Endothelial cell of umbilical vein (primary cell): ENCODE measurements at regions of chr2 and their contacts with region 1.

Region 1: GRCh38 chr2:223101340-223102039 is 49.5 kb downstream of the KCNE4 start:
- DNase-seq: peak; percentile 51
- H3K4me3 ChIP-seq: no peak overlapping the region
- H3K27ac ChIP-seq: no peak overlapping the region
- H3K4me1 ChIP-seq: no peaks in the 10 kb centered on the region
- H3K27me3 ChIP-seq: no peaks in the 10 kb centered on the region
- CTCF ChIP-seq: peak; percentile 24 to 52
- POLR2A ChIP-seq: no peak

Region 2: GRCh38 chr2:222982010-222982908 is 119.2 kb before region 1 on chr2:
- CTCF ChIA-PET with region 1: interaction called, 14 read pairs
- POLR2A ChIA-PET with region 1: no interaction called
- dilution Hi-C with region 1: no loop called
- intact Hi-C with region 1: no loop called
- DNase-seq: peak; percentile 54
- H3K4me3 ChIP-seq: no peak overlapping the region
- H3K27ac ChIP-seq: no peak overlapping the region
- H3K4me1 ChIP-seq: no peaks in the 10 kb centered on the region
- H3K27me3 ChIP-seq: no peaks in the 10 kb centered on the region
- CTCF ChIP-seq: peak in 1 of 2 donors; percentile 50
- POLR2A ChIP-seq: no peak